ENCODE measurements at regions of chr13 and their contacts with region 1.

Region 1: DNA sequence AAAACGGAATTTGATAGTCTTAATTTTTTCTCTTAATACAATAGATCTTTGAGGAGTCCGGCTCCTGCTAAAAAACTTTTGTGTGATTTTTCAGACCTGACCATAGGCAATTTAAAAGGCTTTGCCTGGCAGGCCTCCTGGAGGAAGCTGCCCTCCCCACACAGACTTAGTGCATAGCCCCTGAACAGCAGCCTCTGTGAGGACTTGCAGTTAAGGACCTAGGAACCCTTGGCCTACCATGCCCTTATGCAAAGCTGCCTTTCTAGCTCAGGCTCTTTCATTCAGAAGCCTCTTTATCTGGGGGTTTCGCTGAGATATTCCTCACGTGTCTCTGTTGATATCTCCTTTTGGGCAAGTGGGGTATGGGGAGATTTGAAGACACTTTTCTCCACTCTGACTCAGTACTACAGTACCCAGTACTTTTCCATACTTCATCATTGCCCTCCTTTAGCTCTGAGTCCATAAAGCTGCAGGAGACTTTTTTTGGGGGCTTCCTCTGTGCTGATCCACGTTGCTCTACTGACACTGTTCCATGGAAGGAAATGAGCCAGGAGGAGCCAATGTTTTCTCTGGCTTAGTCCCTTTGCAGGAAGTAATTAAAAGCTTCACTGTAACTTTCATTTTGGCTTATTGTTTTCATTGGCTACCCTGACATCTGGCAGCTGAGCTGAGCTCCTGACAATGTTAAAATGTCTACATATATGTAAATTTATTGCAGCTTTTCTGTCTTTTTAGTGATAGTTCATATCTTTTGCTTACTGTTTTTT is 283.1 kb downstream of the TDRD3 start:
- DNase-seq: no peak
- H3K4me3 Mint-ChIP-seq: no peak overlapping the region
- H3K27ac Mint-ChIP-seq: no peak overlapping the region
- H3K4me1 Mint-ChIP-seq: no peaks in the 10 kb centered on the region
- H3K27me3 Mint-ChIP-seq: no peaks in the 10 kb centered on the region

Region 2: DNA sequence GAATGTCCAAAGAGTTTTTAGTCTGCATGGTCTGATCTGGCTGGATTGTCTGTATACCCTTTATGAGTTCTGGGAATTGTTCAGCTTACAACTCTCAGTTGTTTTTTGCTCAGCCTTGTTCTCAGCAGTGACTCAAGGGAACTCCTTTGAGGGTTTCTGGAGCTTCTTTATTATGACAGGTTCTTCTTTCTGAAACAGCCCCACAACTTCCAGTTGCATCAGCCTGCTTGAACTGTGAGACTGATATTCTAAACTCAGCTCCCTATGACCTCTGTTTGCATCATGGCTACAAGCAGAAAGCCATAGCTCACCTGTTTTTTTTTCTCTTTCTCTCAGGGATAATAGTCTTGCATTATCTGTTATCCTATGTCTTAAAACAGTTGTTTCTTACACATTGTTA is 198.1 kb before region 1 on chr13:
- CTCF ChIA-PET with region 1: no interaction called
- POLR2A ChIA-PET with region 1: no interaction called
- intact Hi-C with region 1: loop called (anchors 10 kb)
- DNase-seq: peak; percentile 11
- H3K4me3 Mint-ChIP-seq: no peak overlapping the region
- H3K27ac Mint-ChIP-seq: no peak overlapping the region
- H3K4me1 Mint-ChIP-seq: peaks cover 2% of the 10 kb centered on the region
- H3K27me3 Mint-ChIP-seq: no peaks in the 10 kb centered on the region